HepG2 (cell line): ENCODE measurements at regions of chr4 and their contacts with region 1.

Region 1: DNA sequence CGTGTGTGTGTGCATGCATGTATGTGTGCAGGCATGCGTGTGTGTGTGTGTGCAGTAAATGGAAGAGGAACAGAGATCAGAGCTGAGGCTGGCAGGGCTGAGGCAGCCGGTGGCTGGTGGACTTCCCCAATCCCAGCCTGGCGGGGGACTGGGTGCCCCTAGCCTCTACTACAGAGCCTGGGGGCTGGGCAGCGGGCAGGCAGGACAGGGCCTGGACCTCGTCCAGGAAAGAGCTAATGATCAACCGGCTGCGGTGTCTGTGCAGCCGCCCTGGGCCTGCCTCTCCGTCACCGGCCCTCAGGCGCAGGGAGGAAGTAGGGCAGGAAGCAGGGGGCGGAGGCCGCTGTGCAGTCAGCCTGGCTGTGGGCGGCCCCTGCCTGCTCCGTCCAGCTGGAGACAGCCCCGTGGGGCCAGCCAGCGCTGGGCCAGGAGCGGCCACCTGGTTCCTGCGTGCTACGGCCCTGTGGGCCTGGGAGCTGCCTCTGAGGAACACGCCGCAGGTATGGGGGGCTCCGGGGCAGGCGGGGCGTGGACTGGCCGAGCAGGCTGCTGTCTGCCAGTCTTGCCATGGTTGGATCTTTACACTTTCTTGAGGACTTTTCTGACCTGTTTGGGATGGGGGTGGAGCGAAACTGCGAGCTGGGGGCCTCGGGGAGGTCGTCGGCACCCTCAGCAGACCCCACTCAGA is at the start of gene SH3TC1:
- DNase-seq: peak; percentile 86
- ATAC-seq: peak; percentile 89
- H3K4me3 ChIP-seq: peak within 1 kb of the TSS; percentile 73 to 88 (median 85)
- H3K27ac ChIP-seq: peak within 1 kb of the TSS; percentile 66
- H3K4me1 ChIP-seq: peaks cover 64% of the 10 kb centered on the region
- H3K27me3 ChIP-seq: peaks cover 0 to 35% of the 10 kb centered on the region in 2 experiments; a peak in 3 of 5 replicates
- CTCF ChIP-seq: peak; percentile 37; the same call in 1 of the 2 replicates
- EP300 ChIP-seq: no peak; a peak in 1 of 4 replicates
- POLR2A ChIP-seq: peak in 1 of 2 experiments; percentile 58; a peak in 2 of 4 replicates
- RAD21 ChIP-seq: peak; percentile 14; the same call in 1 of the 2 replicates
- total RNA-seq, gene SH3TC1: 10.1 and 14.9 TPM in 2 replicates

Region 2: DNA sequence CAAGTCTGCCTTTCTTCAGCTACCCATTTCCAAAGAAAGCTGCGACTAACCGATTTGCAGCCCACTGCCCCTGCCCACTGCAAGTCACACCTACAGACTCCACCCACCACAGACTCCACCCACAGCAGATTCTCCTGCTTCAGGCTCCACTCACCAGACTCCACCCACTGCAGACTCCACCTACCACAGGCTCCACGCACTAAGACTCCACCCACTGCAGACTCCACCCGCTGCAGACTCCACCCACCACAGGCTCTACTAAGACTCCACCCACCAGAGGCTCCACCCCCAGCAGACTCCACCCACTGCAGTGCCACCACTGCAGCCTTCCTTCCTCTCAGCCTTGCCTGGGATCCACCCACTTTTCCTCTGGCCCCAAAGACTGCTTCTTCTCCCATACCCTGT is 81.8 kb before region 1 on chr4:
- CTCF ChIA-PET with region 1: no interaction called
- POLR2A ChIA-PET with region 1: no interaction called
- in situ Hi-C with region 1: no loop called
- intact Hi-C with region 1: no loop called
- DNase-seq: peak; percentile 12
- ATAC-seq: peak; percentile 40
- H3K4me3 ChIP-seq: no peak overlapping the region
- H3K27ac ChIP-seq: no peak overlapping the region
- H3K4me1 ChIP-seq: peaks cover 30% of the 10 kb centered on the region
- H3K27me3 ChIP-seq: peaks cover 3 to 9% of the 10 kb centered on the region in 2 experiments
- CTCF ChIP-seq: no peak
- EP300 ChIP-seq: no peak
- POLR2A ChIP-seq: no peak
- RAD21 ChIP-seq: no peak

Region 3: GRCh38 chr4:8225706-8226443 is 26.8 kb after region 1 on chr4:
- CTCF ChIA-PET with region 1: no interaction called
- POLR2A ChIA-PET with region 1: interaction called, 11 read pairs
- in situ Hi-C with region 1: no loop called
- intact Hi-C with region 1: loop called (anchors 1 kb)
- DNase-seq: peak; percentile 73
- ATAC-seq: peak; percentile 71
- H3K4me3 ChIP-seq: peak overlapping the region in 2 of 3 experiments; percentile 18 to 42; a peak in 4 of 6 replicates
- H3K27ac ChIP-seq: peak overlapping the region; percentile 75
- H3K4me1 ChIP-seq: peaks cover 60% of the 10 kb centered on the region
- H3K27me3 ChIP-seq: no peaks in the 10 kb centered on the region
- CTCF ChIP-seq: 0 out of 2 replicates have a peak, but pooled peaks have one; percentile 7
- EP300 ChIP-seq: peak in 1 of 2 experiments; percentile 68; a peak in 1 of 4 replicates
- POLR2A ChIP-seq: no peak
- RAD21 ChIP-seq: no peak

Region 4: GRCh38 chr4:8391972-8392371 is 192.9 kb after region 1 on chr4:
- CTCF ChIA-PET with region 1: no interaction called
- POLR2A ChIA-PET with region 1: no interaction called
- in situ Hi-C with region 1: no loop called
- intact Hi-C with region 1: no loop called
- DNase-seq: no peak
- ATAC-seq: no peak
- H3K4me3 ChIP-seq: no peak overlapping the region
- H3K27ac ChIP-seq: no peak overlapping the region
- H3K4me1 ChIP-seq: no peaks in the 10 kb centered on the region
- H3K27me3 ChIP-seq: no peaks in the 10 kb centered on the region; a peak in 1 of 5 replicates
- CTCF ChIP-seq: no peak
- EP300 ChIP-seq: no peak
- POLR2A ChIP-seq: no peak
- RAD21 ChIP-seq: no peak

Region 5: DNA sequence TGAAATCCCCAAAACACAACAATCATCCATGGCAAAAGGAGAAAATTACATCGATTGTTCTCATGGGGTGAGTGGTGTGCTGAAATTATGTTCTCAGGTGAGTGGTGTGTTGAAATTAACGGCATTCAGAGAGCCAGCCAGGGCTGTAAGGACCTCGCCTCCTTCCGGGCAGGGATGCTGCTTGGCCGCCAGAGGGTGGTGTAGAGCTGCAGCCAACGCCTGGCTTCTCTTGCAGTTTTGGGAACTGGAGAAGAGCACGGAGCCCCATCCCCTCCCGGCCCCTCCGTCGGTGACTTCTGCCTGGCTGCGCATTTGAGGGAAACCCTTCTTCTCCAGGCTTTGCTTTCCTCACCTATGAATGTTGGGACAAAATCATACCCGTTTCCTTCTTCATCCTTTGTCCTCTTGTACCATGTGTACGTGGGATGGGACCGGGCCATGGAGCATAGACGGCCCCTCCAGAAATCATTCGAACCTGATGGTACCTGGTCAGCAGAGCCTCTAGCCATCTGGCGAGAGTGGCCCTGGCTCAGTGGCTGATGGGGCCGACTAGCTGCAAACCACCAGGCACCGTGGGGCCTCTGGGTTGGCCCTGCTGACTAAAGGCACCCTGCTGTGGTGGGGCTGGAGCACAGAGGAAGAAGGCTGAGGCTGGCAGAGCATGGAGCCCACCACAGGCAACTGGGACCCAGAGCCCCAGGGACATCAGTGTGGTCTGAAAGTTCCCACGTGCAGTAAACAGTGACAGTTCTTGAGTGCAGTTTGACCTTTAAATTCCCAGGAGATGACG is 269.9 kb after region 1 on chr4:
- CTCF ChIA-PET with region 1: no interaction called
- POLR2A ChIA-PET with region 1: no interaction called
- in situ Hi-C with region 1: no loop called
- intact Hi-C with region 1: no loop called
- DNase-seq: peak; percentile 16
- ATAC-seq: peak; percentile 84
- H3K4me3 ChIP-seq: no peak overlapping the region
- H3K27ac ChIP-seq: no peak overlapping the region
- H3K4me1 ChIP-seq: no peaks in the 10 kb centered on the region
- H3K27me3 ChIP-seq: no peaks in the 10 kb centered on the region
- CTCF ChIP-seq: peak; percentile 88
- EP300 ChIP-seq: no peak
- POLR2A ChIP-seq: no peak
- RAD21 ChIP-seq: peak; percentile 66